Activated CD4-positive, alpha-beta T cell treated with anti-CD3 and anti-CD28 coated beads, Interleukin-2, amount 10 ng/mL, durations not matched to agents 24 days and 14 days (primary cell): ENCODE measurements at regions of chr7 and their contacts with region 1.

Region 1: DNA sequence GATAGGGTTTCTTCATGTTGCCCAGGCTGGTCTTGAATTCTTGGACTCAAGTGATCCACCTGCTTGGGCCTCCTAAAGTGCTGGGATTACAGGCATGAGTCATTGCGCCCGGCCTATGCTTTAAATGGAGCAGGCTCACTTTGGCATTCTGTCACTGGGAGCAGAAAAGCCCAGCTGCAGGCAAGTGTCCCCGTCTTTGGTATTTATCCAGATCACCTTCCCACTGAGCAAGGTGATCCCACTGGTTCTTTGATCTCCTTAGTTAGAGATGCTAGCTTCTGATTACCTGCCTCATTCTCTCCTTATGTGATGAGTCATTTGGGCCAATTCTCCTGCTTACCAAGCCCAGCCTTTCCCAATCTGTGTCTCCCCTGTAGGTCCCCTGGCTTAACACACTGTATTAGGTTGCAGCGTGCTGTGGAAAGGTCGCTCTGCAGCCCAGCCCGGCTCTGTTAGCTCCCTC is 39.3 kb downstream of the SPDYE5 start:
- DNase-seq: no peak
- H3K4me3 Mint-ChIP-seq: no peak overlapping the region
- H3K27ac Mint-ChIP-seq: no peak overlapping the region
- H3K4me1 Mint-ChIP-seq: peaks cover 17% of the 10 kb centered on the region
- H3K27me3 Mint-ChIP-seq: no peaks in the 10 kb centered on the region

Region 2: DNA sequence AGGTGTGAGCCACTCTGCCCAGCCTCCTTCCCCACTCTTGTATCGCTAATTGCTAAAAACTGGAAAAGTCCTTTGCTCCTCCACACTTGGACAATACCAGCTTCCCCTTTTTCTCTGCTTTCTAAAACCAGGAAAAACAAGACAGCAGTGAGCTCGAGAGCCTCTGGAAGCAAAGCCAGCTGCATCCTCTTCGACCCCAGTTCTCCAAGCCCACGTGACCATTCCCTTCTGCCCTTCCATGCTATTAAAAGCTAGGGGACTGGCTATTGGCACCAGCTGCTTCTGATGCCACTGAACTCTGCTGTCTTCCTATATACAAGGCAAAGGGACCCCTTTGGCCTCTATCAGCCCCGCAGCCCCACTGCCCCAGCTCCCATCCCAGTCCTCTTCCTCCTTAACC is 53.0 kb after region 1 on chr7:
- intact Hi-C with region 1: no loop called
- DNase-seq: no peak
- H3K4me3 Mint-ChIP-seq: no peak overlapping the region
- H3K27ac Mint-ChIP-seq: no peak overlapping the region
- H3K4me1 Mint-ChIP-seq: no peaks in the 10 kb centered on the region
- H3K27me3 Mint-ChIP-seq: no peaks in the 10 kb centered on the region

Region 3: DNA sequence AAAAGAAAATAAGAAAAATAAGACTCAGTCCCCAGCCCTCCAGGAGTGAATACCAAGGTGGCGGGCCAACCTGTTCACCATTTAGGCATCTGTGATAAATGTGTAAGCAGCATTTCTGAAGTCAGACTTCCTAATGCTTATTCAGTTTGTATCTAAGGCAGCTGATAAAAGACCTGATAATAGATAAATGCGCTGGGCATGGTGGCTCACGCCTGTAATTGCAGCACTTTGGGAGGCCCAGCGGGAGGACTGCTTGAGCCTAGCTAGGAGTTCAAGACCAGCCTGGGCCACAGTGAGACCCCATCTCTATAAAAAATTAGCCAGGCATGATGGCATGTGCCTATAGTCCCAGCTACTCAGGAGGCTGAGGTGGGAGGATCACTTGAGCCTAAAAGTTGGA is 64.4 kb after region 1 on chr7:
- intact Hi-C with region 1: loop called (anchors 2 kb)
- DNase-seq: no peak
- H3K4me3 Mint-ChIP-seq: no peak overlapping the region
- H3K27ac Mint-ChIP-seq: no peak overlapping the region
- H3K4me1 Mint-ChIP-seq: peaks cover 15% of the 10 kb centered on the region
- H3K27me3 Mint-ChIP-seq: no peaks in the 10 kb centered on the region

Region 4: DNA sequence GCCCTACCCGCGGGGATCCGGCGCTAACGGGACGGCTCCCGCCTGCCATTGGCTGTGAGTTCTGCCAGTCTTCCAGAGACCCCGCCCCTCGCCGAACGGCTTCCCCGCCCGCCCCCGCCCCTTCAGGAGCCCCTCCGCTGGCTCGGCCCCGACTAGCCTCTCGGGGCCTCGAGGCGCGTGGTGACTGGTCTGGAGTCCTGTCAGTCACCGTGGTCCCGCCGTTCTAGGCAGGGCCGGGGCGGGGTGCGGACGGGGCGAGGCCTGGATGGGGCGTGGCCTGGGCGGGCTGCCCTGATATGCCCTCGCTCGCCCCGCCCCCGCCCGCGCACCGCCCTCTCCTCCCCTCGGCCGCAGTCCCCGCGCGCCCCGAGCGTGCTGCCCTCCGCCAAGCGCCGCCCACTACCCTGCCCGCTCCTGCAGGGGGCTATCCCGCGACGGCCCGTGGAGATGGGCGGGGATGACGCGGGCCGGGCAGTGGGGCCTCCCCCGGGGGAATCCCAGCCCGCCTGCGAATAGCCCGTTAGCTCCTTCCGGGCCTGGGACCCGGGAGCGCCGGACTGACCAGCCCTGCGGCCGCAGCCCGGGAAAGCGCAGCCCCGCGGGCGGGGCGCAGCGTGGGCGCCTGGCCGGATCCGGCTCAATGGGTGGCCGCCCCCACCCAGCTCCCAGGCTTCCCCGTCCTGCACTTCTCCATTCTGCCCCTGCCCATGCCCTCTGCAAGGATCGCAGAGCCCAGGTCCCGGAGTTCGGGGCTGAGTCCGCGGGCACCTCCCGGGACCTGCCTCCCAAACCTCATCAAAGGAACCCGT is 207.8 kb after region 1 on chr7:
- intact Hi-C with region 1: loop called (anchors 1 kb)
- DNase-seq: peak; percentile 100
- H3K4me3 Mint-ChIP-seq: peak overlapping the region; percentile 90
- H3K27ac Mint-ChIP-seq: peak overlapping the region; percentile 97
- H3K4me1 Mint-ChIP-seq: peaks cover 16% of the 10 kb centered on the region
- H3K27me3 Mint-ChIP-seq: peaks cover 25% of the 10 kb centered on the region

Region 5: DNA sequence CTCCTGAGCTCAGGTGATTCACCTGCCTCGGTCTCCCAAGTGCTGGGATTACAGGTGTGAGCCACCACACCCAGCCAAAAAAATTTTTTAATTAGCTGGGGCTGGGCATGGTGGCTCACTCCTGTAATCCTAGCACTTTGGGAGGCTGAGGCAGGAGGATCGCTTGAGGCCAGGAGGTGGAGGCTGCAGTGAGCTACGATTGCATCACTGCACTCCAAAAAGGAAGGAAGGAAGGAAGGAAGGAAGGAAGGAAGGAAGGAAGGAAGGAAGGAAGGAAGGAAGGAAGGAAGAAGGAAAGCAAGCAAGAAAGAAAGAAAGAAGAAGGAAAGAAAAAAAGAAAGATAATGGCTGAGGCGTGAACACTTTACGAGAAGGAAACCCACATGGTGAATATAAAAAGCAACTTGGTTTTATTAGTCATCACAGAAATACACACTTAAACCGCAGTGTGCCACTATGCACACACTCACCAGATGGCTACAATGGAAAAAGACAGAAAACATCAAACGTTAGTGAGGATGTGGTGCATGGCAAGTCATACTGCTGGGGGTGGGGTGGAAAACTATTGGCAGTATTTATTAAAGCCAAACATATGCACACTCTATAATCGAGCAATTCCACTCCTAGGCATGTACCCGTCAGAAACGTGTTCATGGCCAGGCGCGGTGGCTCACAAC is 245.0 kb after region 1 on chr7:
- intact Hi-C with region 1: loop called (anchors 10 kb)
- DNase-seq: peak; percentile 77
- H3K4me3 Mint-ChIP-seq: peak overlapping the region; percentile 9
- H3K27ac Mint-ChIP-seq: peak overlapping the region; percentile 83
- H3K4me1 Mint-ChIP-seq: peaks cover 31% of the 10 kb centered on the region
- H3K27me3 Mint-ChIP-seq: peaks cover 15% of the 10 kb centered on the region